Left ventricle myocardium inferior (tissue), 1 donor: ENCODE measurements at regions of chr7 and their contacts with region 1.

Region 1: DNA sequence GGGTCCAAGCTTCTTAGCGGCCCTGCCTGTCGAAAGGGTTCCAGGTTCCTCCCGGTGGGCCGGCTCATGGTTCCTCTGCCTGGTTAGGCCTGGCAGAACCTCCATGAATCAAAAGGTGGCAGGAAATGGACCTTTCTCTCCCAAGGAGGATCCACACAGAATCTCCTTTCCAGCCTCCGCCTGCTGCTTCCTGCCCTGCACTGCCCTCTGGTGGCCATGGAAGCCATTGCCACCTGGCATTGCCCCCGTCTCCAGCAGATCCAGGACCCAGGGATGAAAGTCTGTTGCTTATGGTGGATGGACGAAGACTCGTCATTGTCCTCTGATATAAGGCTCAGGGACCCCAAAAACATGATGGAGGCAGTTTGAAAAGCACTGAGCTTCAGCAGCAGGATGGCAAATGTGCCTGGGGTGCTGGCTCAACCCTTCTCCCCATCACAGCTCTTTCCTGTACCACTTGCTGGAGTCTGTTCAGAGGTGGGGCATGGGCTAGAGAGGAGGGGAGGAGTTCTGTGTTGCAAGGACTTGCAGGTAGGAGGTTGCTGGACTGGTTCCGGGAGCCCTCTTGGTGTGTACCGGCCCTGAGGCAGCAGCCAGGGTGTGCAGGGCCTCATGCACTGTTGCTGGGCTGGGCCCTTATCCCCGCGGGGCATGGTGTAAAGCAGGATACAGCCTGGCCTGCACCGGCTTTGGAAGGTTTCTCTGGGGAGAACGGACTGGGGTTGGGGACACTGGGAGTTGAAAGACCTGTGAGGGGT is 11.3 kb upstream of the INMT start:
- DNase-seq: peak; percentile 74
- H3K4me3 ChIP-seq: no peak overlapping the region
- H3K27ac ChIP-seq: no peak overlapping the region
- H3K4me1 ChIP-seq: peaks cover 12% of the 10 kb centered on the region
- H3K27me3 ChIP-seq: no peaks in the 10 kb centered on the region
- CTCF ChIP-seq: peak; percentile 99

Region 2: DNA sequence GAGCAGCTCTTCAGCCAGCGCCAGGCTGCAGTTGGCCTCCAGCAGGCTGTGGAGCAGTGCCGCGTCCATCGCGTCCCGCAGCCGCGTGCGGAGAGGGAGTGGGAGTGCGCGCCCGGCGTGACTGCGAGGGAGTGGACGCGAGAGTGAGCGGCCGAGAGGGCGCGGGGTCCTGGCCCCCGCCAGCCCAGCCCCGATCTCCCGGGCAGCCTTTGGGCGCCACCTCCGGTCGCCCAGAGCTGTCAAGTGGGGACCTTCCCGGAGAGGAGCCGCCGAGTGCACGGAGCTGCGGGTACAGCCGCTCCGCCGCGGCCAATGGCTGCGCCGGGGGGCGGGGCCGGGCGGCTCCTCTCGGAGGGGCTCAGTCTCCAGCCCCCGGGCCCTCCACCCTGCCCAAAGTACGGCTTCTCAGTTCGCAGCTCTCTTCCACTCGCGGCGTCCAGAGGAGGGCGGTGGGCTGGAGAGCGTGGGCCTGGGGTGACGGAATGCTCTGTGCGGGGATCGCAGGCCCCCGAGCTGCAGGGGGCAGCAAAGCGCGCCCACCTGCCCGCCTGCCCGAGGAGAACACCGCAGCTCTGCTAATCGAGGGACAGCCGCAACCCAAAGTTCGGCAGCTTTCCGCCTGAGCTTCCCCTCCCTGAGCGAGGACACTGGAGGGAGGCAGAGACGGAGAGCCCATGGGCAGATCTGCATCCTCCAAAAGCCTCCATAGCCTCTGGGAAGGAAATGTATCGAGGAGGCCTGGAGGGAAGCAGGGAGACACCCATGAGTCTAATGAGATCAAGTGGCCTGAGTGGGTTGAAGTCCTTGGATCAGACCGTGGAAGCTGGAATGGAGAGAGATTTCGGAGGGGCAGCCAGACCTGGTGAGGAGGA is 58.2 kb before region 1 on chr7 and contains the start of gene CRHR2:
- intact Hi-C with region 1: loop called (anchors 10 kb)
- DNase-seq: peak; percentile 26
- H3K4me3 ChIP-seq: peak within 1 kb of the TSS; percentile 67
- H3K27ac ChIP-seq: peak within 1 kb of the TSS; percentile 4
- H3K4me1 ChIP-seq: peaks cover 15% of the 10 kb centered on the region
- H3K27me3 ChIP-seq: peaks cover 83% of the 10 kb centered on the region
- CTCF ChIP-seq: peak; percentile 64
- total RNA-seq, gene CRHR2: 0.19 TPM

Region 3: GRCh38 chr7:30911561-30911969 is 171.0 kb after region 1 on chr7 and contains the start of gene AQP1:
- intact Hi-C with region 1: no loop called
- DNase-seq: peak; percentile 86
- H3K4me3 ChIP-seq: peak within 1 kb of the TSS; percentile 70
- H3K27ac ChIP-seq: peak within 1 kb of the TSS; percentile 92
- H3K4me1 ChIP-seq: peaks cover 98% of the 10 kb centered on the region
- H3K27me3 ChIP-seq: no peaks in the 10 kb centered on the region
- CTCF ChIP-seq: peak; percentile 27
- total RNA-seq, gene AQP1: 253 TPM